Right cardiac atrium (tissue), 5 donors: ENCODE measurements at regions of chr2 and their contacts with region 1.

Region 1: GRCh38 chr2:100242891-100243619 is 79.2 kb downstream of the LONRF2 start:
- DNase-seq: peak; percentile 70 to 92 (median 87)
- ATAC-seq: peak; percentile 79 to 80
- H3K4me3 ChIP-seq: no peak overlapping the region
- H3K27ac ChIP-seq: no peak overlapping the region
- H3K4me1 ChIP-seq: no peaks in the 10 kb centered on the region
- H3K27me3 ChIP-seq: no peaks in the 10 kb centered on the region

Region 2: DNA sequence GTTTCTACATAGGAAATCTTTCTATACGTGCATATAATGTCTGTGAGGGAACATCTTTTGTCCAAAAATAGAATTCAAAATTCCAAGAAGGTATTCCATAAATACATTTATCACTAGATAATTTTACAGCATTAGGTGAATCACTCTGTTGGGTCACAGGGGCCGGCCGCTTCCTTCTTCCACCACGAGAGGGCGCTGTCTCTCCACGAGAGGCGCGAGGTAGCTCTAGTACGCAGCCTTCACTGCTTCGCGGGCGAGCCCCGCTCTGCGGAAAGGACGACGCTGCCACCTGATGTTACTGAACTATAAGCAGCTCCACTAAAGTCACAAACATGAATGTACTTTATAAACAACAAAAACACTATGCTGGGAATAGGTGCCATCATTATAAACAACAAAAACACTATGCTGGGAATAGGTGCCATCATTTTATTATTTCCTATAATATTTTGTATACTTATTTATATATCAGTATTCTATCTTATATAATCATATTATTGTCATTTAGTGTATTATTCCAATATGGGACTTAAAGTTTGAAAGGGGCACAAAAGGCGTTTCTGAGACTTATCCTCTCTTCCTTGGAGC is 683.9 kb before region 1 on chr2:
- intact Hi-C with region 1: loop called (anchors 5 kb)
- DNase-seq: peak; percentile 83 to 95 (median 94)
- ATAC-seq: peak; percentile 94 to 95
- H3K4me3 ChIP-seq: no peak overlapping the region
- H3K27ac ChIP-seq: no peak overlapping the region
- H3K4me1 ChIP-seq: no peaks in the 10 kb centered on the region
- H3K27me3 ChIP-seq: no peaks in the 10 kb centered on the region

Region 3: DNA sequence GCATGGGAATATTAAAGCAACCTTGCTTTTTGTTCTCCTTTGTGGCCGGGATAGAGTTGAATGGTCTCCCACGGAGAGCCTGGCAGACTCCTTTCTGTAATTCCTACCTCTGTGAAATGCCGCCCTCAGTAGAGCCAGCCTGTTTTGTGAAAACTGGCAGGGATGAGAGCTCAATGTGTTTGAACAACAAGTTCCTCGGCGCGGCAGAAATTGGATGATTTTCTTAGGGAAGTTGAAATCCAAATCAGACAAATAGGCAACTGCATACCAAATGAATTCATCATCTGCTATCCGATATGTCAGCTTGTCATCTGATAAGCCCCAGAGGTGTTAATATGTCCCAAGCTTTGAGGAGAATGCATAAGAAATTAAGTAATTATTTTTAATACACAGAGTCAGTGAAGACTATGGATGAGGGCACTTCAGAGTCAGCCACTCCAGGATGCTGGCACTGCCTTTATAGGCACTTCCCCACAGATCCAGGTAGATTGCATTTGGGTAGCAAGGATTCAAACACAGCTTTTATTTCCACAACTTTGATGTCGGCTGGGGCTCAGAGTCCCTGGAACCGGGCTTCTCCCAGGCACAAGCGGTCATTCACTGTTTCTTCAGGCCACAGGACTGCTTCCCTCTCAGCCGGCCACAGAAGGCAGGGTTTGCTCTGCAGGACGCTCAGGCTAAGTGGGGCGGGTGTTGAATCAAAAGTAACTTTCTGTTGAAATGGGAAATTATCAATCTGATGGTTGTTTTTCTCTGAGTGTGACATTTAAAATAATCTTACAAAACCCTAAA is 670.5 kb before region 1 on chr2:
- intact Hi-C with region 1: loop called in 1 of 4 experiments (anchors 5 kb)
- DNase-seq: peak in 1 of 3 donors; percentile 51
- ATAC-seq: peak; percentile 47 to 77
- H3K4me3 ChIP-seq: no peak overlapping the region
- H3K27ac ChIP-seq: no peak overlapping the region
- H3K4me1 ChIP-seq: no peaks in the 10 kb centered on the region
- H3K27me3 ChIP-seq: no peaks in the 10 kb centered on the region

Region 4: DNA sequence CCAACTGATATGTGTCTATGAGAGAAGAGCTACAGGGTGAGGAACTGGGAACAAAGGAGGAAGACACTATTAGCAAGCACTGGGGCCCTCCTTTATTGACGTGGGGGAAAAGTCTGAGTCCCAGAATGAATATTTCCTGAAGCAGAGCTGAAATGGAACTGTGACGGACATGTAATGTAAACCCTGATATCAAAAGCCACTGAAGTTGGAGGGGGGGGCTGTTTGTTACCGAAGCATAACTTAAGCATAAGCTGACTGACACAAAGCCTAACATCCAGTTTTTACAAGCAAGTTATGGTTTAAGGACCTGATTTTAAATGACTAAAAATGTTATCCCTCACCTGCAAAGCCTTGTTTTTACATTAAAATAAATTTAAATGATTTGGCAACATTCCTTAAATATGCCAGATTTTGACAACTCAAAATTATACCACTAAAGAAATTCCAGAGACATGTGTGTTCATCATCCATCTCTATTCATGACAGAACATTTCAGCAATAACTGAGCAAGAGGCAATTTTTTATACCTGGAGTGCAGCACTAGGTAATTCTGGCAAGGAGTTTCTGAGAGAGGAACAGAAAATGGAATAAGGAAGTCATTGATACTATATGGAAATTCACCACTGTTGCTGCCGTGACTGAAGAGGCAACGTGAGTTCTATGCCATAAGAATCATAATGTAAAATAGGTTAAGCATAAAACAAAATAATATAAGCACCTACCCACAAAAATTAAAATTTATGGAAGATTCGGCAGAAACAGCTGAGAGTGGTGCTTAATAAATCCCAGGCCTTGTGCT is 286.6 kb before region 1 on chr2:
- intact Hi-C with region 1: no loop called
- DNase-seq: no peak
- ATAC-seq: no peak
- H3K4me3 ChIP-seq: no peak overlapping the region
- H3K27ac ChIP-seq: no peak overlapping the region
- H3K4me1 ChIP-seq: no peaks in the 10 kb centered on the region
- H3K27me3 ChIP-seq: no peaks in the 10 kb centered on the region

Region 5: GRCh38 chr2:100317634-100318033 is 74.6 kb after region 1 on chr2:
- intact Hi-C with region 1: no loop called
- DNase-seq: no peak
- ATAC-seq: no peak
- H3K4me3 ChIP-seq: no peak overlapping the region
- H3K27ac ChIP-seq: no peak overlapping the region
- H3K4me1 ChIP-seq: peaks cover 2% of the 10 kb centered on the region
- H3K27me3 ChIP-seq: no peaks in the 10 kb centered on the region

Region 6: GRCh38 chr2:100365434-100365833 is 122.4 kb after region 1 on chr2:
- intact Hi-C with region 1: no loop called
- DNase-seq: no peak
- ATAC-seq: no peak
- H3K4me3 ChIP-seq: no peak overlapping the region
- H3K27ac ChIP-seq: no peak overlapping the region
- H3K4me1 ChIP-seq: no peaks in the 10 kb centered on the region
- H3K27me3 ChIP-seq: no peaks in the 10 kb centered on the region